ENCODE measurements at regions of chr12 and their contacts with region 1.

Region 1: DNA sequence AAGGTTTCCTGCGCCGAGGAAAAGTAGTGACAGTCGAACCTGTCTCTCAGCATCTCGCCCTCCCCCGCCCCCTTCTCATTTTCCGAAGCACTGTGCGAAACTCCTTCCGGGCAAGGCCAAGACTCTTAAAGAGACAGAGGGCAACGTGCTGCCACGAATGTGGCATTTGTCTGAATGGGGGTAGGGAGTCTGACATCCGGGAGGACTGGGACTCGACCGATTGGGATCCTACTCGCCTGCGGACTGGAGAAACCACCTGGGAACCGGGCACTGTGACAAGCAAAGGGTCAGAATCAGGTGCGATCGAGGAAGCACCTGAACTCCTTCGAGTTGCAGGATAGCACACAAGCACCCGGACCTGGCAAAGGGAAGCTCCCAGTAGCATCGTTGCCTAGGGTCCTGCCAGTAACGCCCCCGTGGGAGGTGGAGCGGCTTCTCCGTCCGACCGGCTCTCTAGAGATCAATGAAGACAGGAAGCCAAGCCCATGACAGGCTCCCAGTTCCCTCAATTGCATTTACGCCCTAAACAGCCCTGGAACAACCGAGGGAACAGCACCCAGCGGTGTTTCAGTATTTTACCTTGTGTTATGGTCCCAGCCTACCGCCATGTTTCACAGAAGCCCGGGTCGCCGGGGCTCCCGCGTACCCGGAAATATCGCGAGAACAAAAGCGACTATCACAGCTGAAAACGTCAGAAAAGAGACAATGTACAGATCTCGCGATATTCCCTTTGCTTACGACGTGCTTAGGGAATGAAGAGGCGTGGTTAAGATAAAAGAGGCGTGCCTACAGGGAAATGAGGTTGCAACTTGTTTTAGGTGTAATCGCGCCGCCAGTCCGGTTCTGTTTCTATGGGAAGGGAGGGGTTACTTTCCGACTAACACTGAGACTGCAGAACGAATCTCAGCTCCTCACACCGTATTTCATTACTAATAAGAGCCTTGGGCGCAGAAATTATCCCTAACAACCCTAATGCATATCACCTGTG is at the start of gene ERGIC2:
- DNase-seq: peak; percentile 71 to 97 (median 82)

Region 2: GRCh38 chr12:29282031-29282816 is 98.6 kb before region 1 on chr12:
- intact Hi-C with region 1: no loop called
- DNase-seq: no peak

Region 3: DNA sequence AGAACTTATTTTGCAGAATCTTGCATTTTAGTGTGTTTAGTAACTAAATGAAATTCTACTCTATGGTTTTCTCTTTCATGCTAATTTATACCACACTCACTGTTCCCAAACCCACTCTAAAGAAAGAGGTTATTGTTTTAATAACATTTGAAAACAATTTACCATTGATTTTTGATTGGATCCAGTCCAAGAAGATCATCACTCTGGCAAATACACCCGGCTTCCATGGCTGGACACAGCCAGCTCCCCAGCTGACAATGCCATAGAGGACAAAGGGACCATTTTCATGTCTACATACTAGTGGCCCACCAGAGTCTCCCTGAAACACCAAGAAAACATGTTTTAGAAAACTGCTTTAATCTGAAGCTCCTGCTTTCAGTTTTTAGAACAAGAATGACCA is 74.3 kb after region 1 on chr12:
- intact Hi-C with region 1: loop called (anchors 5 kb)
- DNase-seq: peak in 8 of 10 donors; percentile 23 to 91 (median 58)

Measured in posterior cingulate gyrus (tissue), 11 donors.